ENCODE measurements at regions of chr18 and their contacts with region 1.

Region 1: DNA sequence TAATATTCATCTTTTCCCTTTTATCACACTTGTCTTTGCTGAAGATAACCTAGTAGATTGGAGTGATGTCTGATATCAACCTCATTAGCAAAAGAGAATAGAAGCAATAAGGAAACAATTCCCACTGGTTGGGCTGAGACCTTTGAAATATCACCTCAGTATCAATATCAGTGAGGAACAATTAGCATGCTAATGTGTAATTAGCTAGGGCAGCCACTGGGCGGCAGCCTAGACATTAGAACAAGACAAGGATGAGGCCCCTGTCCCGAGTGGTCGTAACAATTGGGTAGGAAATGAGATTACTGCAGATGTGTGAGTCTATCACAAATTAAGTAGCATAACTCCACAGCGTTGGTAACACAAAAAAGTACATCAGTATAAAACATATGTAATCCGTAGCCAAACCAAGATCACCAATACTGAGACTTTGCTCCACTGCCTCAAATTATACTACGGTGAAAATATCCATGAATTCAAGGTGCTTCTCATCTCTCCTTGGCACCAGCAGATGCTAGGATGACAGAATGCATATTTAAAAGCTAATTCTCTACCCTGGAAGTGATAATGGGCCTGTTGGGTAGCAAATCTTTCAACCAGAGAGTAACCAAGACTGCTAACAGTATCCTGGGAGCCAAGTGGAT is 99.1 kb downstream of the ALPK2 start:
- DNase-seq: peak in 3 of 5 donors; percentile 30 to 60 (median 56)
- ATAC-seq: peak in 3 of 4 donors; percentile 54 to 67 (median 62)
- H3K4me3 ChIP-seq: no peak overlapping the region
- H3K27ac ChIP-seq: no peak overlapping the region
- H3K4me1 ChIP-seq: no peaks in the 10 kb centered on the region
- H3K27me3 ChIP-seq: no peaks in the 10 kb centered on the region
- CTCF ChIP-seq: peak; percentile 59 to 84 (median 73)
- POLR2A ChIP-seq: no peak

Region 2: GRCh38 chr18:58378411-58379379 is 151.1 kb before region 1 on chr18:
- intact Hi-C with region 1: no loop called
- DNase-seq: no peak
- ATAC-seq: peak in 3 of 4 donors; percentile 33 to 64 (median 56)
- H3K4me3 ChIP-seq: no peak overlapping the region
- H3K27ac ChIP-seq: no peak overlapping the region
- H3K4me1 ChIP-seq: peaks cover 0 to 6% (median 0%) of the 10 kb centered on the region in 12 donors
- H3K27me3 ChIP-seq: no peaks in the 10 kb centered on the region
- CTCF ChIP-seq: no peak
- POLR2A ChIP-seq: no peak

Region 3: DNA sequence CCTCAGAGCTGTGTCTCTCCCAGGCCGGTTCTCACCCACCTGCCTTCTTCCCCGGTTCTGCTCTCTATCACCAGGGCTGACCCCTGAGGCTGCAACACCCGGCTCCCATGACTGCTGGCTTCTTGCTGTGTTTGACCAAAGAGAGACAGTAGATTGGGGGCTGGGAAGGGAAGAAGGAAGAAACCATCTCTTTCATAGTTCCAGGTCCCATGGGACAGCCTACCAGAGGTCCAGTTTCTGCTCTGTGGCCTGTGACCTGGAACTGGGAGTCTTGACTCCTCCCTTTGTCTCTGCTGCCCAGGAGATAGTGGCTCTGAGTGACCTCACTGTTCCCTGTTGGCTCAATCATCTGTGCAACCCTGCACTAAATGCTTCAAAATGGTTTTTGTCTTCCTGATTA is 61.0 kb after region 1 on chr18:
- intact Hi-C with region 1: loop called in 2 of 10 experiments (anchors 2 to 5 kb)
- DNase-seq: peak in 1 of 5 donors; percentile 50
- ATAC-seq: peak; percentile 31 to 51 (median 38)
- H3K4me3 ChIP-seq: no peak overlapping the region
- H3K27ac ChIP-seq: peak overlapping the region in 11 of 12 donors; percentile 19 to 86 (median 74)
- H3K4me1 ChIP-seq: peaks cover 6 to 60% (median 40%) of the 10 kb centered on the region in 12 donors
- H3K27me3 ChIP-seq: no peaks in the 10 kb centered on the region
- CTCF ChIP-seq: no peak
- POLR2A ChIP-seq: no peak

Region 4: GRCh38 chr18:58624011-58624410 is 94.2 kb after region 1 on chr18:
- intact Hi-C with region 1: loop called in 1 of 10 experiments (anchors 10 kb)
- DNase-seq: peak in 3 of 5 donors; percentile 40 to 56 (median 50)
- ATAC-seq: peak; percentile 67 to 81 (median 72)
- H3K4me3 ChIP-seq: no peak overlapping the region
- H3K27ac ChIP-seq: peak overlapping the region in 11 of 12 donors; percentile 60 to 92 (median 83)
- H3K4me1 ChIP-seq: peaks cover 0 to 25% (median 7%) of the 10 kb centered on the region in 12 donors
- H3K27me3 ChIP-seq: no peaks in the 10 kb centered on the region
- CTCF ChIP-seq: no peak
- POLR2A ChIP-seq: no peak

Region 5: DNA sequence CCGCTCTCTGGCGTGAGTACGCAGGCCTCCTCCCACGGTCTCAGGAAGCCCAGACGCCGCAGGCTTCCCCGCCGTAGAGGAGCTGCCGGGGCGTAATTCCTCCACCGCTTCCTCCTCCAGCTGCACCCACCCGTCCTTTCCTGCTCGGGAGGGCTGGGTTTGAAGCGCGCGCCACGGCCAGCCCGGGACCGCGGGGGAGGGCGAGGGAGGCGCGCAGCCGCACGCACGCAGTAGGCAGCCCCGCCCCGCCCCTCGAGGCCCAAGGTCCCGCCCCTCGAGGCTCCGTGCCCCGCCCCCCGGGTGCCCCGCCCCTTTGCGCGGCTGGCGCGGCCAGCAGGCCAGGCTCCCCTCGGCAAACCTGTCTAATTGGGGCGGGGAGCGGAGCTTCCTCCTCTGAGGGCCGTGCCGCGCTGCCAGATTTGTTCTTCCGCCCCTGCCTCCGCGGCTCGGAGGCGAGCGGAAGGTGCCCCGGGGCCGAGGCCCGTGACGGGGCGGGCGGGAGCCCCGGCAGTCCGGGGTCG is 141.3 kb after region 1 on chr18 and contains the start of gene MALT1:
- intact Hi-C with region 1: loop called in 5 of 10 experiments (anchors 5 to 10 kb)
- DNase-seq: peak; percentile 94 to 98 (median 94)
- ATAC-seq: peak; percentile 97 to 98 (median 98)
- H3K4me3 ChIP-seq: peak within 1 kb of the TSS; percentile 60 to 97 (median 78)
- H3K27ac ChIP-seq: peak within 1 kb of the TSS; percentile 84 to 98 (median 94)
- H3K4me1 ChIP-seq: peaks cover 0 to 43% (median 14%) of the 10 kb centered on the region in 12 donors
- H3K27me3 ChIP-seq: no peaks in the 10 kb centered on the region
- CTCF ChIP-seq: no peak
- POLR2A ChIP-seq: peak; percentile 31 to 96
- total RNA-seq, gene MALT1: 9.3 to 18.3 (median 10.4) TPM

Region 6: GRCh38 chr18:58761241-58761969 is 231.6 kb after region 1 on chr18:
- intact Hi-C with region 1: loop called (anchors 1 to 2 kb)
- DNase-seq: peak in 4 of 5 donors; percentile 39 to 54 (median 50)
- ATAC-seq: peak; percentile 44 to 78 (median 68)
- H3K4me3 ChIP-seq: no peak overlapping the region
- H3K27ac ChIP-seq: peak overlapping the region in 10 of 12 donors; percentile 43 to 75 (median 50)
- H3K4me1 ChIP-seq: peaks cover 0 to 20% (median 9%) of the 10 kb centered on the region in 12 donors
- H3K27me3 ChIP-seq: no peaks in the 10 kb centered on the region
- CTCF ChIP-seq: no peak
- POLR2A ChIP-seq: no peak

Region 7: DNA sequence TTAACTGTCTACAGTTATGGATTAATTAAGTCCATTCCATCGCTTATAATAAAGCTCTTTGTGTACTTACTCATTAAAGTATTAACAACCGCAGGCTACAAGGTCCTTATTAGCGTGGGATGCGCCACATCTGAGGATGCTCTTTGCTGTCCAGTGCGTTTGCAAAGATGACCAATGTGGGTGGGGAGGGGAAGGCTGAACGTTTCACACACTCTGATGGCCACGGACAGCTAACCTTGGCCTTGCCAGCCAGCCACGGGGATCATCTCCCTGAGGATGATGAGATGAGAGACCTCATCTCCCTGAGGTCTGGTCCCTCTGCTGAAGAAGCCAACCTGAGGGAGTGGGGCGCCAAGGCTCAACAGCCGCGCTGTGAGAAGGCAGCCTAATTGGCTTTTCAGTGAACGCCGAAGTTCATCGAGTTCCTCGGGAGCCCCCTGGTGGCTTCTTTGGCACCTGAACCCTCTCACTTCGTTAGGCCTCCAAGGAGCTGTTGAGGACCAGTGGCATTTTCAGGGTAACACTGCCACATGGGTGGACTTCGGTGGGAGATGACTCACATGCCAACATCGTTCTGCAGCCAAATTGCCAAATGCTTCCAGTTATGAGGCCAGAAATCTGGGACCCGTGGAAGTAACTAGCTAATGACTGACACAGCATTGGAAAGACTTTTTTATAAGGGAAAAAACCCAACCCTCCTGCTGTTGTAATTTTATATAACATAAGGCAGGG is 540.5 kb after region 1 on chr18:
- intact Hi-C with region 1: loop called in 6 of 10 experiments (anchors 5 to 10 kb)
- DNase-seq: peak; percentile 82 to 87 (median 82)
- ATAC-seq: peak; percentile 70 to 91 (median 88)
- H3K4me3 ChIP-seq: no peak overlapping the region
- H3K27ac ChIP-seq: no peak overlapping the region
- H3K4me1 ChIP-seq: no peaks in the 10 kb centered on the region
- H3K27me3 ChIP-seq: no peaks in the 10 kb centered on the region
- CTCF ChIP-seq: peak; percentile 81 to 94 (median 86)
- POLR2A ChIP-seq: no peak